Dorsolateral prefrontal cortex (tissue), 120 donors: ENCODE measurements at regions of chr2 and their contacts with region 1.

Region 1: DNA sequence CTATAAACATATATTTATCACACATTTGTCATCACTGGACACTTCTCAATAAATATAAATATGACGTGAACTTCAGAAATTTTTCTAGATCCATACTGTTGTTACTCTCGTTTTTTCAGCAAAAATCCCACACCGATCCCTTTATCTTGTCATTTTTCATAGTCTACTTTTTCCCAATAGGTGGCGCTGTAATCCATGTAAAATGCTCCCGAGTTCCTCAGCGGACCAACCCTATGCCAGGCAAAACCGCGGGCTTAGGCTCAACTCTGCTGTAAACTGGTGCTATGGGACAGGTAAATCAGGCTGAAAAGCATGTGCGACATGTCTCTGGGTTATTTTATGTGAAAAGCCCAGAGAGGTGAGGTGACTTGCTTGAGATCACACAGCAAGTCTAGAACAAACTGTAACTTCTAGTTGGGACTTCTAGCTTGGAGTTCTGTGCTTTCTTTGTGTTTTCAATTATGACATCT is 104.0 kb downstream of the COBLL1 start:
- DNase-seq: peak in 6 of 10 donors; percentile 11 to 49 (median 40)
- H3K4me3 ChIP-seq: peak overlapping the region in 4 of 59 donors; percentile 5 to 18 (median 10)
- H3K27ac ChIP-seq: peak overlapping the region in 10 of 59 donors; percentile 1 to 54 (median 32)
- H3K27me3 ChIP-seq: peaks cover 0 to 5% (median 0%) of the 10 kb centered on the region in 45 donors
- CTCF ChIP-seq: peak; percentile 55 to 90 (median 74)

Region 2: GRCh38 chr2:164910101-164910899 is 172.7 kb after region 1 on chr2:
- intact Hi-C with region 1: loop called (anchors 5 to 10 kb)
- DNase-seq: no peak
- H3K4me3 ChIP-seq: no peak overlapping the region
- H3K27ac ChIP-seq: peak overlapping the region in 29 of 59 donors; percentile 8 to 72 (median 37)
- H3K27me3 ChIP-seq: no peaks in the 10 kb centered on the region
- CTCF ChIP-seq: no peak

Region 3: DNA sequence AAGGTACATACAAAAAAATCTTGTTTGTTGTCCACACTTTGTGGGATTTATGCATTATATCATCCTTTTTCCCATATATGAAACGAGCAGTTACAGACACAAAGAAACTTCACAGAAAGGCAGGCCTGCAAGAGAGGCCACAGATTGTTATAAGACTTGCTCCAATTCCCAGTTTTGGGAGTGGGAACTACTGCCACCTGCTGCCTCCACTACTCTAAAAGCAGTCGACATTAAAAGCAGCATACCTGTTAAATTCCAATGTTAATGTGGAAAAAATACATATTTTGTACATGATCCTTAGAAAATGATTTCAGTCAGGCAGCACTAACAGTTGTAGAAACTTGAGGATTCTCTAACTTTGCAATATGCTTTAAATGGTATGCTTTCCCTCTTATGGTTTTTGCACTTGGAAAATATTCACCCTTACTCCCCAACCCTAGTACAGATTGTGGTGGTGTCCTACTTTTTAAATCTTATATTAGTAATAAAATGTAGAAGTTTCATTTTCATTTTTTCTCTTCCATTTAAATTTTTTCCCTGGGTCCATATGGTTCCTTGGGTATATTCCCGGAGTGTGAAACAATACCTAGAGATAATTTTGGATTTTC is 179.8 kb after region 1 on chr2:
- intact Hi-C with region 1: loop called (anchors 5 to 10 kb)
- DNase-seq: peak in 3 of 10 donors; percentile 6 to 28 (median 25)
- H3K4me3 ChIP-seq: no peak overlapping the region
- H3K27ac ChIP-seq: peak overlapping the region in 9 of 59 donors; percentile 3 to 46 (median 9)
- H3K27me3 ChIP-seq: no peaks in the 10 kb centered on the region
- CTCF ChIP-seq: peak in 53 of 56 donors; percentile 17 to 75 (median 47)